Psoas muscle (tissue), 8 donors: ENCODE measurements at regions of chr1 and their contacts with region 1.

Region 1: GRCh38 chr1:10585948-10586524 is 111.3 kb downstream of the PEX14 start:
- DNase-seq: no peak
- ATAC-seq: no peak
- H3K4me3 ChIP-seq: no peak overlapping the region
- H3K27ac ChIP-seq: no peak overlapping the region
- H3K4me1 ChIP-seq: peaks cover 5% of the 10 kb centered on the region
- H3K27me3 ChIP-seq: no peaks in the 10 kb centered on the region
- CTCF ChIP-seq: no peak

Region 2: DNA sequence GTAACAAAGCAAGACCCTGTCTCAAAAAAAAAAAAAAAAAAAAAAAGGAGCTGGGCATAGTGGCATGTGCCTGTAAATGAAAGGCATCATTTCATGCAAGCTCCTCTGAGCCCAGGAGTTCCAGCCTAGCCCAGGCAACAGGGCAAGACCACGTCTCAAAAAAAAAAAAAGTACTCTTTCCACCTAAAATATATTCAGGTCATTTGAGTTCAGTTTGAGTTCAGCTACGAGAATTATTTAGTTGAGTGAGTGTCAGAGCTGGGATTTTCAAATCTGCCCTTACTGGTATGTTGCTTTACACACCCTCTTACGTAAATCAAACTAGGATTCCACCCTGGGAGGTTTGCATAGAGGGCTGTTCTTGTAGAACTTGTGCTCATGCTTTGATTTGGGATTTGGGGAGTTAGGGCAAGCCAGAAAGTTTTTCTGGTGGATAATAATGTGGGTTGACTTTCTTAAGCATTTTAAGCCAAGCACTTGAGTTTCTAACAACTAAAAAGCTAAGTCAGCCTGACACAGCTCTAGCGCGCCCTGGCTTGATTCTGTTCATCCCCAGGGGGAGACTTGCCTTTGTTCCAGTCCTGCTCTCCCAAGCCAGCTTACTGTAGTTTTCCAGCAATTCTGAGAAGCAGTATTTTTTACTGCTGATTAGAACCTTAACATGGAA is 198.5 kb before region 1 on chr1:
- intact Hi-C with region 1: no loop called
- DNase-seq: peak; percentile 30 to 58
- ATAC-seq: peak in 2 of 4 donors; percentile 49 to 57
- H3K4me3 ChIP-seq: peak overlapping the region; percentile 45
- H3K27ac ChIP-seq: peak overlapping the region; percentile 58
- H3K4me1 ChIP-seq: peaks cover 8% of the 10 kb centered on the region
- H3K27me3 ChIP-seq: no peaks in the 10 kb centered on the region
- CTCF ChIP-seq: no peak

Region 3: GRCh38 chr1:10549904-10550664 is 36.0 kb before region 1 on chr1:
- intact Hi-C with region 1: loop called in 1 of 2 experiments (anchors 5 kb)
- DNase-seq: no peak
- ATAC-seq: no peak
- H3K4me3 ChIP-seq: no peak overlapping the region
- H3K27ac ChIP-seq: no peak overlapping the region
- H3K4me1 ChIP-seq: no peaks in the 10 kb centered on the region
- H3K27me3 ChIP-seq: no peaks in the 10 kb centered on the region
- CTCF ChIP-seq: no peak